ENCODE measurements at regions of chr10 and their contacts with region 1.

Region 1: DNA sequence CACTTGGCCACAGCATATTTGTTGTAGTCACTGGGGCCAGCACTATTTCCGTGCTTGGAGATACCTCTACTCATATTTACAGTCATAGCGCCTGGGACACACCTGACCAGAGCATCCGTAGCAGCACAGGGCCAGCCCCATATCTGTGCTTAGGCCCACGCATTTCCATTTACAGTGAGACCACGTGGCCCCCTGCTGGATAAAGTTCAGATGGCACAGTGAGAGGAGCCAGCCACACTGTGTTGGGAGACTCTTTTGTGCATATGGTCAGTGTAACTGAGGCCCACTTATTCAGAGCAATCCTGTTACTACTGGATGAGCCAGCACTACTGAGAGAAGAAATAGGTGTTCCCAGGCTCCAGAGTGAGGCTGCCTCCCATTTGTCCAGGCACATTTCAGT is 455.3 kb downstream of the REEP3 start:
- DNase-seq: peak; percentile 75
- ATAC-seq: peak; percentile 93
- H3K4me3 Mint-ChIP-seq: no peak overlapping the region
- H3K27ac Mint-ChIP-seq: no peak overlapping the region
- H3K4me1 Mint-ChIP-seq: peaks cover 2% of the 10 kb centered on the region; the same call in 1 of the 2 replicates
- H3K27me3 Mint-ChIP-seq: no peaks in the 10 kb centered on the region; the same call in none of the 2 replicates
- CTCF ChIP-seq: peak; percentile 73

Region 2: GRCh38 chr10:63887023-63887589 is 89.4 kb before region 1 on chr10:
- CTCF ChIA-PET with region 1: interaction called, 19 read pairs
- POLR2A ChIA-PET with region 1: no interaction called
- DNase-seq: peak; percentile 76
- ATAC-seq: peak; percentile 93
- H3K4me3 Mint-ChIP-seq: no peak overlapping the region
- H3K27ac Mint-ChIP-seq: no peak overlapping the region
- H3K4me1 Mint-ChIP-seq: peaks cover 26% of the 10 kb centered on the region
- H3K27me3 Mint-ChIP-seq: peaks cover 16% of the 10 kb centered on the region
- CTCF ChIP-seq: peak; percentile 46

Region 3: DNA sequence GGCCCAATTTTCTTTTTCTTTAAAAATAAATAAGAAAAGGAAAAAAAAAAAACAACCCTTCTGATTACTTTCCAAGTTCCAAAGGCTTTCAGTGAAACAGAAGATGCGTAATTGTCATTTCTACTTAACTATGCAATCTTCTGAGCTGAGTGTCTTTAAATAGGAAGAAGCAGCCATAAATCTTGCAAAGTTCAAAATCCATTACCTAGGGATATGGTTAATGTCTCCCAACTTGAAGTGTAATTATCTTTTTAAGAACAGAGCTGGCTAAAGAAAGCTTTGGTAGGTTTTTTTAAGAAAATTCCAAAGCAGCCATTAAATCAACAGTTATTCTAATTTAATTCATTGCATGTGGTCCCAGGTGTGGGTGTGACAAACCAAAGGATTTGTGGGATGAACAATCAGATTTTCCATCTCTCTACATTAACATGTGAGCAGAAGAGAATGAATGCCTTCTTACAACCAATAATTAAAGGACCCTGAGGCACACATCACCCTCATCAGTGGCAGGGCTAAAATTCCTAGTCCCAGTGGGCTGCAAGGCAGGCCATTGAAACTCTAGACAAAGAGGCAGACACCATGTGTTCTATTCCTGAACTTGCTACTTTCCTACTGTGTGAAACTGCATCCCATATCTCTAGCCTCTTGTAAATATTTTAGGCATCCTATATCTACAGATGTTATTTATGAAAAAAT is 36.1 kb before region 1 on chr10:
- CTCF ChIA-PET with region 1: interaction called, 15 read pairs
- POLR2A ChIA-PET with region 1: no interaction called
- DNase-seq: no peak
- ATAC-seq: peak; percentile 81
- H3K4me3 Mint-ChIP-seq: no peak overlapping the region
- H3K27ac Mint-ChIP-seq: no peak overlapping the region
- H3K4me1 Mint-ChIP-seq: peaks cover 20% of the 10 kb centered on the region
- H3K27me3 Mint-ChIP-seq: no peaks in the 10 kb centered on the region
- CTCF ChIP-seq: no peak

Region 4: DNA sequence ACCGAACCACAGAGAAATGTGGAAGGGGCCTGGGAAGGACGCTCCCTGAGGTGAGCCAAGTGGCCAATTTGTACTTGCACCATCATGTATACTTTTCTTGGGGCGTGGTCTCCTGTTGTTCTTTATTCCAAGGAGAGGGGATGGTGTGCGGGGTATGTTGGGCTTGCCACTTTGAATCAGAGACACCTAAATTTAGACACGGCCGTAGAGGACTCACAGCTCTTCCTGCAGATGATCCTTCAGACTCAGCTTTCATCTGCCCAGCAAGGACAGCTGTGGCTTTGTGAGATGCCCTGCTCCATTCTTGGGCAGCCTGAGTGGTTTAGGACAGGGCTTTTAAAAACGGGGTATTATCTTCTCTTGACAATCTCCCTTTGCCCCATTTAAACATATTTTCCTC is 17.8 kb after region 1 on chr10:
- CTCF ChIA-PET with region 1: interaction called, 17 read pairs
- POLR2A ChIA-PET with region 1: no interaction called
- DNase-seq: no peak
- ATAC-seq: no peak
- H3K4me3 Mint-ChIP-seq: no peak overlapping the region
- H3K27ac Mint-ChIP-seq: no peak overlapping the region
- H3K4me1 Mint-ChIP-seq: no peaks in the 10 kb centered on the region
- H3K27me3 Mint-ChIP-seq: no peaks in the 10 kb centered on the region
- CTCF ChIP-seq: no peak

Region 5: GRCh38 chr10:64007157-64007556 is 30.6 kb after region 1 on chr10:
- CTCF ChIA-PET with region 1: no interaction called
- POLR2A ChIA-PET with region 1: no interaction called
- DNase-seq: peak; percentile 16
- ATAC-seq: no peak
- H3K4me3 Mint-ChIP-seq: no peak overlapping the region
- H3K27ac Mint-ChIP-seq: no peak overlapping the region
- H3K4me1 Mint-ChIP-seq: peaks cover 9% of the 10 kb centered on the region
- H3K27me3 Mint-ChIP-seq: peaks cover 6% of the 10 kb centered on the region; the same call in 1 of the 2 replicates
- CTCF ChIP-seq: no peak

Region 6: GRCh38 chr10:64041185-64041988 is 64.8 kb after region 1 on chr10:
- CTCF ChIA-PET with region 1: interaction called, 23 read pairs
- POLR2A ChIA-PET with region 1: no interaction called
- DNase-seq: peak; percentile 85
- ATAC-seq: peak; percentile 91
- H3K4me3 Mint-ChIP-seq: peak overlapping the region; percentile 25; the same call in 1 of the 2 replicates
- H3K27ac Mint-ChIP-seq: no peak overlapping the region
- H3K4me1 Mint-ChIP-seq: peaks cover 6% of the 10 kb centered on the region
- H3K27me3 Mint-ChIP-seq: no peaks in the 10 kb centered on the region
- CTCF ChIP-seq: peak; percentile 99

Region 7: GRCh38 chr10:64148607-64149006 is 172.1 kb after region 1 on chr10:
- CTCF ChIA-PET with region 1: no interaction called
- POLR2A ChIA-PET with region 1: no interaction called
- DNase-seq: no peak
- ATAC-seq: 0 out of 2 replicates have a peak, but pooled peaks have one; percentile 16
- H3K4me3 Mint-ChIP-seq: no peak overlapping the region
- H3K27ac Mint-ChIP-seq: no peak overlapping the region; the same call in 1 of the 2 replicates
- H3K4me1 Mint-ChIP-seq: peaks cover 19% of the 10 kb centered on the region
- H3K27me3 Mint-ChIP-seq: no peaks in the 10 kb centered on the region
- CTCF ChIP-seq: no peak

Region 8: DNA sequence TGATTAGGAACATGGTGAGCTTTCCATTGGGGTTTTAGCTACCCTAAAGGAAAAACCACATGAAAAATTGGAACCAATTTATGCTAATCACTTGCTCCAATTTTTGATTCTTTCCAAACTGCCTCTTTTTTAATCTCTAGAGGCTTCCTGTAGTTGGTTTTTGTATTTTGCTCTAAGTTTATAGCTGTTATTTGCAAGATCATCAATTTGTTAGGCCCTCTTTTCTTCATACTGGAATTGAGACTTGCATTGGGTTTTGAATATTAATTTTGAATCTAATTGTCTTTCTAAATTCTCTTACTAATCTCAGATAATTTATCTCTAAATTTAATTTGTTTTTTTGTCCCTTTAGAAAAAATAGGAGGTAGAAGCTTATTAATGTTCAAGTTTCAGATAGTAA is 258.0 kb after region 1 on chr10:
- CTCF ChIA-PET with region 1: no interaction called
- POLR2A ChIA-PET with region 1: no interaction called
- DNase-seq: no peak
- ATAC-seq: no peak
- H3K4me3 Mint-ChIP-seq: no peak overlapping the region
- H3K27ac Mint-ChIP-seq: no peak overlapping the region
- H3K4me1 Mint-ChIP-seq: no peaks in the 10 kb centered on the region
- H3K27me3 Mint-ChIP-seq: no peaks in the 10 kb centered on the region
- CTCF ChIP-seq: no peak